Activated CD4-positive, alpha-beta T cell treated with anti-CD3 and anti-CD28 coated beads for 36 hours (primary cell): ENCODE measurements at regions of chrX and their contacts with region 1.

Region 1: GRCh38 chrX:47523297-47523696 is 37.7 kb upstream of the ARAF start:
- DNase-seq: peak; percentile 88
- ATAC-seq: peak; percentile 99
- H3K4me3 Mint-ChIP-seq: peak overlapping the region; percentile 60
- H3K27ac Mint-ChIP-seq: no peak overlapping the region
- H3K4me1 Mint-ChIP-seq: no peaks in the 10 kb centered on the region
- H3K27me3 Mint-ChIP-seq: no peaks in the 10 kb centered on the region

Region 2: GRCh38 chrX:47425220-47425619 is 98.1 kb before region 1 on chrX:
- CTCF ChIA-PET with region 1: no interaction called
- POLR2A ChIA-PET with region 1: no interaction called
- intact Hi-C with region 1: no loop called
- DNase-seq: no peak
- ATAC-seq: no peak
- H3K4me3 Mint-ChIP-seq: no peak overlapping the region
- H3K27ac Mint-ChIP-seq: no peak overlapping the region
- H3K4me1 Mint-ChIP-seq: no peaks in the 10 kb centered on the region
- H3K27me3 Mint-ChIP-seq: no peaks in the 10 kb centered on the region

Region 3: GRCh38 chrX:47446431-47446830 is 76.9 kb before region 1 on chrX:
- CTCF ChIA-PET with region 1: no interaction called
- POLR2A ChIA-PET with region 1: no interaction called
- intact Hi-C with region 1: no loop called
- DNase-seq: no peak
- ATAC-seq: no peak
- H3K4me3 Mint-ChIP-seq: no peak overlapping the region
- H3K27ac Mint-ChIP-seq: no peak overlapping the region
- H3K4me1 Mint-ChIP-seq: no peaks in the 10 kb centered on the region
- H3K27me3 Mint-ChIP-seq: no peaks in the 10 kb centered on the region

Region 4: GRCh38 chrX:47497273-47497672 is 26.0 kb before region 1 on chrX:
- CTCF ChIA-PET with region 1: interaction called, 18 read pairs
- POLR2A ChIA-PET with region 1: no interaction called
- intact Hi-C with region 1: loop called in 1 of 2 experiments (anchors 2 kb)
- DNase-seq: no peak
- ATAC-seq: no peak
- H3K4me3 Mint-ChIP-seq: no peak overlapping the region
- H3K27ac Mint-ChIP-seq: no peak overlapping the region
- H3K4me1 Mint-ChIP-seq: no peaks in the 10 kb centered on the region
- H3K27me3 Mint-ChIP-seq: no peaks in the 10 kb centered on the region